Heart right ventricle (tissue), 16 donors: ENCODE measurements at regions of chr15 and their contacts with region 1.

Region 1: DNA sequence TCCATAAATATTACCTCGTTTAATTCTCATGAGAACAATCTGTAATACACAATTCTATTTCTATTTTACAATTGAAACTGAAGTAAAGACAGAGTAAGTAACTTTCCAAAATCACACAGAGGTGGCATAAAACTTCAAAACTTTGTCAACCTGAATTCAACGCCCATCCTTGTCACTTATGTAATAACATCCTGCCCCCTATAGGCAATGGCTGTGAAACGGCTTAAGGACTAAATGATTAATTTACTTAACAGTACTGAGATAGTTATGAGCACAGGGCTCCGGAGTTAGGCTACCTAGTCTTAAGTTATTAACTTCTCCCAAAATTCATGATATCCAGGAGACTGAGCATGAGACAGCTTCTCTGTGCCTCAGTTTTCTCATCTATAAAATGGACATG is 293.1 kb upstream of the CHRM5 start:
- DNase-seq: no peak
- ATAC-seq: no peak
- H3K4me3 ChIP-seq: no peak overlapping the region
- H3K27ac ChIP-seq: no peak overlapping the region
- H3K4me1 ChIP-seq: no peaks in the 10 kb centered on the region
- H3K27me3 ChIP-seq: peaks cover 0 to 46% (median 16%) of the 10 kb centered on the region in 7 donors
- CTCF ChIP-seq: peak in 5 of 9 donors; percentile 29 to 48 (median 34)

Region 2: DNA sequence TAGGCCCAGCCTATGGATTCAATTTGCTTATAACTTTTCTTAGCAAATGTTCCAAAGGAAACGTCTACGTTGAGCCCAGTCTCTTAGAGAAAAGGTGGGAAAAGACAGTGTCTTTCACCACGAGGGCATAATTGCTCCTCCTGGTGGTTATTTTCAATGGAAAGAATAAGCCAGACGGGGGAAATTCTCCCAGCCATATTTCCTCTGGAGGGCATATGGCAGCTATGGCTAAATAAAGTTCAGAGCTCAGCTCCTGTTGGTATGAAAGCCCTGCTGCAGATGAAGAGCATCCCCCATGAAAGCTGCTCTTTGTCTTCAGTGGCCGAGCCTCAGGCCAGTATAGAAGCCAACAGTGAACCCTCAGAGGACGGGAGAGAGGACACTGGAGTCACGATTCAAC is 66.5 kb before region 1 on chr15:
- intact Hi-C with region 1: loop called in 1 of 10 experiments (anchors 10 kb)
- DNase-seq: no peak
- ATAC-seq: no peak
- H3K4me3 ChIP-seq: no peak overlapping the region
- H3K27ac ChIP-seq: no peak overlapping the region
- H3K4me1 ChIP-seq: no peaks in the 10 kb centered on the region
- H3K27me3 ChIP-seq: peaks cover 0 to 17% (median 0%) of the 10 kb centered on the region in 7 donors
- CTCF ChIP-seq: peak in 1 of 9 donors; percentile 16